ENCODE measurements at regions of chr6 and their contacts with region 1.

Region 1: DNA sequence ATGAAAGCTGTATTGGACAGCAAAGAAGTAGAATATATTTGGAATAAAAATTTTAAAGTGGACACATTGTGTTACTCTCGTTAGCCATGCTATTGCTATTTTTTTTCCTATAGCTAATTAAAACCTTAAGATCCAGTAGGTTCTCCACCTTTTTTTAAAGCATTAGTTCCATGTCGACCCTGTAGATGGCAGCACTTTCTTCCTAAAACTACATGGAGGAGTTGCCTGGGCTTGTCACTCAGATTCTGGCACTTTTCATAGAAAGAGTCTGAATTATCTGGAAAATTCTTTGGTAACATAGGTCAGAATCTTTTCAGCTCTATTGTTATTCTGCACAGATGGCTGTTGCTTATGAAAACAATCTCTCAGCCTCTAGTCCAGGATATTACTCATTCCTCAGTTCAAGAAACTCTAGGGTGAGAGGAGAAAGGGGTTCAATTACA is 42.0 kb upstream of the ESR1 start:
- DNase-seq: peak; percentile 90
- H3K4me3 ChIP-seq: peak overlapping the region; percentile 57
- H3K27ac ChIP-seq: no peak overlapping the region
- H3K4me1 ChIP-seq: peaks cover 9% of the 10 kb centered on the region
- H3K27me3 ChIP-seq: no peaks in the 10 kb centered on the region

Region 2: DNA sequence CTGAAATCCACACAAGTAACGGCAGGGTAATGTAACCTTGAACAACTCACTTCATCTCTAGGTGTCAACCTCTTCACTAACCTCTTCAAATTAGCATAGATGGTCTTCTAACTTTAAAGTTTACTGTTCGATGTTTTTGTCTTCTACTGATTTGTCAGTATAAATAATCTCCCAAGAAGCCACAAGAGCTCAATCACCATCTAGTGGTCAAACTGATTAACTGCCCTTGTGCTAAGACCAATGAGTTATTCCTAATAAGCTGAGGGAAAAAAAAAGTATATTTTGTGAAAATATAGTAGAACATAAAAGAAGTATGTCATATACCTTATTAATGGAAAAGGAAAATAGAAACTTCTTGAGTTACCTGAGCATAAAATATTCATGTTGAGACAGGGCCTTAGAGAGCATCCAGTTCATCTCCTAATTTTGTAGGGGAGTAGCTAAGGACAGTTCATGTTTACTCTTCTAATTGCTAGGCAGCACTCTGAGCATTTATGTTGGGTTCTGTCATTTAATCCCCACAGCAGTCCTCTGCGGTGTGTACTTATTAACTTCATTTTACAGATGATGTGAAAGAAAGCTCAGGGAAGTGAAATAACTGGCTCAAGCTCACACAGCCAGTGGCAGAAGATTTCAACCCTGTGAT is 359.1 kb after region 1 on chr6:
- in situ Hi-C with region 1: loop called (anchors 10 kb)
- DNase-seq: peak; percentile 75
- H3K4me3 ChIP-seq: no peak overlapping the region
- H3K27ac ChIP-seq: no peak overlapping the region
- H3K4me1 ChIP-seq: peaks cover 9% of the 10 kb centered on the region; the same call in 1 of the 2 replicates
- H3K27me3 ChIP-seq: no peaks in the 10 kb centered on the region

Region 3: GRCh38 chr6:152218880-152219279 is 453.4 kb after region 1 on chr6:
- in situ Hi-C with region 1: no loop called
- DNase-seq: no peak
- H3K4me3 ChIP-seq: no peak overlapping the region
- H3K27ac ChIP-seq: no peak overlapping the region
- H3K4me1 ChIP-seq: no peaks in the 10 kb centered on the region
- H3K27me3 ChIP-seq: no peaks in the 10 kb centered on the region

Measured in GM23248 (cell line).